Activated naive CD4-positive, alpha-beta T cell treated with anti-CD3 and anti-CD28 coated beads for 36 hours (primary cell): ENCODE measurements at regions of chr12 and their contacts with region 1.

Region 1: GRCh38 chr12:106309671-106310505 is 7.4 kb downstream of the TCP11L2 start:
- DNase-seq: no peak
- H3K4me3 Mint-ChIP-seq: no peak overlapping the region
- H3K27ac Mint-ChIP-seq: peak overlapping the region; percentile 19
- H3K4me1 Mint-ChIP-seq: peaks cover 59% of the 10 kb centered on the region
- H3K27me3 Mint-ChIP-seq: no peaks in the 10 kb centered on the region

Region 2: GRCh38 chr12:106645074-106645421 is 335.2 kb after region 1 on chr12:
- CTCF ChIA-PET with region 1: no interaction called
- intact Hi-C with region 1: no loop called
- DNase-seq: no peak
- H3K4me3 Mint-ChIP-seq: no peak overlapping the region
- H3K27ac Mint-ChIP-seq: no peak overlapping the region
- H3K4me1 Mint-ChIP-seq: no peaks in the 10 kb centered on the region
- H3K27me3 Mint-ChIP-seq: no peaks in the 10 kb centered on the region

Region 3: GRCh38 chr12:107441665-107442300 is 1131.9 kb after region 1 on chr12:
- CTCF ChIA-PET with region 1: no interaction called
- intact Hi-C with region 1: loop called (anchors 5 kb)
- DNase-seq: peak; percentile 8
- H3K4me3 Mint-ChIP-seq: peak overlapping the region; percentile 25
- H3K27ac Mint-ChIP-seq: peak overlapping the region; percentile 42
- H3K4me1 Mint-ChIP-seq: peaks cover 16% of the 10 kb centered on the region
- H3K27me3 Mint-ChIP-seq: no peaks in the 10 kb centered on the region